GM10248 (cell line): ENCODE measurements at regions of chr11 and their contacts with region 1.

Region 1: GRCh38 chr11:59171508-59172322 is at the start of gene DTX4:
- DNase-seq: peak; percentile 89
- CTCF ChIP-seq: peak; percentile 100

Region 2: DNA sequence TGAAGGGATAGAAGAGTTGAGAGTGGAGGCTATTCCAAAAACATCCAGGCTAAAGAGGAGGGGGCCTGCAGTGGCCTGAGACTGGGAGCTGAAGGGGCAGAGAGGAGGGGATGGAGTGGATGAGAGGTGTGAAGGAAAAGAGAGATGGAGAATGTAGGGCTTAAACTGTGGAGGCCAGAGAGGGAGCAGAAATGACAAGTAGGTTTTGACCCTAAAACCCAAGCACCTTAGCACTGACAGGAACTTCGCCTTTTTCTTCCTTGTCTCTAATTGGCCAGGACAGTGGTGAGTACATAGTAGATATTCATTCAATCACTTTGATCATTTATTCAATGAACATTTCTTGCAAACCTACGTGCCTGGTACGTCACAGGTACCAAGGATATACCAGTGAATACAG is 57.4 kb before region 1 on chr11:
- CTCF ChIA-PET with region 1: no interaction called
- POLR2A ChIA-PET with region 1: no interaction called
- DNase-seq: no peak
- CTCF ChIP-seq: no peak

Region 3: DNA sequence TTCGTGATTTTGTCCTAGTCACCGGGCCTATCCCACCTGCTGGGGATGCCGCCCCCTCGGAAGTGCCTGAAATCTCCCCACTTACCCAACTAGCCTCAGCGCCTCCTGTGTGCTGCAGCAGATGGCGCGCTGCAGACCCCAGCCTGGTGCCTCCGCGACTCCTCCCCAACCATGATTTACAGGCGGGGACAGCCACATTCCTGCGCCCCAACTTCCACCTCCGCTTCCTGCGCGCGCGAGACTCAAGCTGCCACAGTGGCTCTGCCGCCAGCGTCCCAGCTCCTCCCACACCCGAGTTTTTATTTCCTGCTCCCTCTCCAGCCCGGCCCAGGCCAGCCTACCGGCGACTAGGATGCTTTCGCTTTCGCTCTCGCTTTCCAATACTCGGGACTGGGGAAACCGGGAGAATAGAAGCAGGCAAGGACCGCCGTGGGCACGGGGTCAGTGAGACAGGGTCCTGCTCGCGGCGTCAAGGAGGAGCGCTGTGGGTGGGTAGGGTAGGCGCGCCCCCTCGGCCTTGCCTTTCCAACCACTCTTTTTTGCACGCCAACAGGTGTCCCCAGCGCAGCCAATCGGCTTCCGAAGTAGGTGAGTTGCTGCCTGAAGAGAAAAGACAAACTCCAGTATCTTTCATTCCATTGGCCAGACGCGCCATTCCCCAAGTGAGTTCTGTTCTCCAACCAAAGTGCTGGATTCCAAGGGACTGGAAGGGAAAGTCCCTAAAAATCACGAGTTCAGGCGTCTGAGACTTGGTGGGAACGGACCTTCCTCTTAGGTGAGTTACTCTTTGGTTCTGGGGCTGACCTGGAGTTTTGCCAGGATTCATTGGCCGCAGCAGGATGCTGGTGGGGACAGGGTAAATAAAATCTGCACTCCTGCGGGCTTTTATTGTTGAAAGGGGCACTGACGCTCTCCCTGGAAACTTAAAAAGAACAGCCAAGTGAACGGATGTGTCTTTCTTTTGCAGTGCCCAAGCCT is 28.9 kb before region 1 on chr11 and contains the start of gene FAM111A:
- CTCF ChIA-PET with region 1: interaction called, 37 read pairs
- POLR2A ChIA-PET with region 1: no interaction called
- DNase-seq: peak; percentile 82
- CTCF ChIP-seq: peak; percentile 70

Region 4: GRCh38 chr11:59186130-59186594 is 14.4 kb after region 1 on chr11:
- CTCF ChIA-PET with region 1: interaction called, 962 read pairs
- POLR2A ChIA-PET with region 1: interaction called, 10 read pairs
- DNase-seq: peak; percentile 79
- CTCF ChIP-seq: peak; percentile 59

Region 5: GRCh38 chr11:59216641-59217564 is 45.2 kb after region 1 on chr11:
- CTCF ChIA-PET with region 1: interaction called, 962 read pairs
- POLR2A ChIA-PET with region 1: no interaction called
- DNase-seq: peak; percentile 64
- CTCF ChIP-seq: no peak

Region 6: DNA sequence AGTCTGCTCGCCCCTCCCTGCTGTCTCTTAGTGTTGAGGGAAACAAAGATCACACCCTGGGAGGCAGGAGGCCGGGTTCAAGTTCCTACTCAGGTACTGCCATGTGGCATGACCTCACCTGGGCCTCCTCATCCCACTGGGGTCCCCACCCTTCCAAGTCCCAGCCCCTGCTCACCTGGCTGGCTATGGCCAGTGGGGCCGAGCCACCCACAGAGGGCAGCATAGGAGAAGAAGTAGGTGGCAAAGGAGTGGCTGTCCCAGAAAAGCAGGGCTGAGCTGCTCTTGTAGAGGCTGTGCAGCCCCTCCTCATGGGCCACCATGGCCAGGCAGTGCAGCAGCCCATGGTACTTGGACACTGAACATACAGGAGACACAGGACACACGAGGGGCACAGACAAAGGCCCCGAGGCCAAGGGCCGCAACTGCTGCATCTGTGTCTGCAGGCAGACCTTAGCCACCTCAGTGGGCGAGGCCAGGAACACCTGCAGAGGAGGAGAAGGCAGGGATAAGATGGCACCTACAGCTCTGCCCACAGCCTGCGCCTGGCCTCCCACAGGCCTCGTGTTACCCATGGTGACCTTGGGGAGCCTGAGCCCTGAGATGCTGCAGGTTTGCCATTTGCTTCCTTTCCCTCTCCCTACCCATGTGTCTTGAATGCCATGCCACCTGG is 91.6 kb after region 1 on chr11:
- CTCF ChIA-PET with region 1: interaction called, 15 read pairs
- POLR2A ChIA-PET with region 1: no interaction called
- DNase-seq: no peak
- CTCF ChIP-seq: peak; percentile 56

Region 7: DNA sequence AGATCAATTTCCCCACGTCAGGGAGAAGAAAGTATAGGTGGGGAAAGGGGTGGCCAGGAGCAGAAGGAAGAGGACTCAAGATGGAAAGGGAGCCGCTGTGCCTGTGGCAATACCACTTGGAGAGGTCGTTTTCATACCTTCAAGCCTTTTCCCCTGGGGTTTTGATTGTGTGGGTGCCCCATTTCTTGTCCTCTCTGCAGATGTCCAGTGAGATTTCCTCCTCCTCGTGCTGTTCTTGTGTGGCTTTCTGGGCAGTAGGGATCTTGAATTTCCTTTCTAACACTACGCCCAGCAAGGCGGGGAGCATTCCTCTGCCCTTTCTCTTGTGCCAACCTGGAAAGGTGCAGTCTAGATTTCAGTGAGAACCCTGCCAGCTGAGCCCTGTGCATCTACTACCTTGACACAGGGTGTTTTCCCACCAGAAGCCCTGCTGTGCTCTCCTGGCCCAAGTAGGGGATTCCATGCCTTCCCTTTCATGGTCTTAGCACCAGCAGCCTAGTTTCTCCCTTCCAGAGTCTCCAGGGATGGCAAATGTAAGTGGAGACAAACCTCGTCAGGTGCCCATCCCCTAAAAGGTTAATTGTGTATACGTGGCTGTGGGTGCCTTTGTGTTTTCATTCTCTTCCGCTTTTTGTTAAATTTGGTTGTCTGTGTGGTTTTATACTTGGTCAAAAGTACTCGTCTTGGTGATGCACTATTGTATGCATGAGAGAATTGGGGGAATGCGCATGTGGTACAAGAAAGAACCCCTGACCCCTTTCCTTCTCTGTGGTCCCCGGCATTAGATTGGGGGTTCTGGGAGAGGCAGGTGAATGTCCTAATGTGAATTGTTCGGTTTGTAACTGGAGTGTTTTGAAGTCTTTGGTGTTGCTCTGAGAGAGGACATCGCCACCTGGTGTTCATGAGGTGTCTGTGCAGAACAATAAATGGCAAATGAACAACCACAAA is 112.4 kb after region 1 on chr11:
- CTCF ChIA-PET with region 1: interaction called, 17 read pairs
- POLR2A ChIA-PET with region 1: no interaction called
- DNase-seq: no peak
- CTCF ChIP-seq: peak; percentile 88

Region 8: GRCh38 chr11:59437770-59438169 is 266.1 kb after region 1 on chr11:
- CTCF ChIA-PET with region 1: interaction called, 77 read pairs
- POLR2A ChIA-PET with region 1: no interaction called
- DNase-seq: no peak
- CTCF ChIP-seq: no peak

Region 9: GRCh38 chr11:59560702-59561469 is 389.2 kb after region 1 on chr11:
- CTCF ChIA-PET with region 1: no interaction called
- POLR2A ChIA-PET with region 1: no interaction called
- DNase-seq: peak; percentile 88
- CTCF ChIP-seq: no peak